Heart left ventricle (tissue), 16 donors: ENCODE measurements at regions of chr12 and their contacts with region 1.

Region 1: GRCh38 chr12:110888256-110888991 is 32.0 kb downstream of the MYL2 start:
- DNase-seq: no peak
- ATAC-seq: peak in 1 of 4 donors; percentile 6
- H3K4me3 ChIP-seq: peak overlapping the region in 5 of 12 donors; percentile 44 to 64 (median 61)
- H3K27ac ChIP-seq: peak overlapping the region in 2 of 12 donors; percentile 65 to 70
- H3K4me1 ChIP-seq: peaks cover 0 to 11% (median 0%) of the 10 kb centered on the region in 12 donors
- H3K27me3 ChIP-seq: no peaks in the 10 kb centered on the region
- CTCF ChIP-seq: peak in 4 of 12 donors; percentile 3 to 25 (median 14)
- POLR2A ChIP-seq: no peak

Region 2: GRCh38 chr12:110449799-110450497 is 438.5 kb before region 1 on chr12 and contains the start of gene ARPC3:
- intact Hi-C with region 1: loop called in 7 of 10 experiments (anchors 2 to 10 kb)
- DNase-seq: peak; percentile 94 to 97 (median 95)
- ATAC-seq: peak; percentile 98 to 99 (median 99)
- H3K4me3 ChIP-seq: peak within 1 kb of the TSS; percentile 62 to 96 (median 85)
- H3K27ac ChIP-seq: peak within 1 kb of the TSS; percentile 74 to 99 (median 92)
- H3K4me1 ChIP-seq: peaks cover 0 to 46% (median 14%) of the 10 kb centered on the region in 12 donors
- H3K27me3 ChIP-seq: no peaks in the 10 kb centered on the region
- CTCF ChIP-seq: peak; percentile 76 to 96 (median 86)
- POLR2A ChIP-seq: peak in 1 of 2 donors; percentile 73
- total RNA-seq, gene ARPC3: 77.2 to 251 (median 108) TPM

Region 3: GRCh38 chr12:110508071-110508586 is 380.3 kb before region 1 on chr12:
- intact Hi-C with region 1: loop called in 8 of 10 experiments (anchors 2 to 10 kb)
- DNase-seq: no peak
- ATAC-seq: no peak
- H3K4me3 ChIP-seq: no peak overlapping the region
- H3K27ac ChIP-seq: no peak overlapping the region
- H3K4me1 ChIP-seq: peaks cover 0 to 4% (median 0%) of the 10 kb centered on the region in 12 donors
- H3K27me3 ChIP-seq: no peaks in the 10 kb centered on the region
- CTCF ChIP-seq: no peak
- POLR2A ChIP-seq: no peak

Region 4: GRCh38 chr12:110619534-110619953 is 268.9 kb before region 1 on chr12:
- intact Hi-C with region 1: loop called in 8 of 10 experiments (anchors 5 to 10 kb)
- DNase-seq: no peak
- ATAC-seq: no peak
- H3K4me3 ChIP-seq: no peak overlapping the region
- H3K27ac ChIP-seq: no peak overlapping the region
- H3K4me1 ChIP-seq: peaks cover 0 to 6% (median 3%) of the 10 kb centered on the region in 12 donors
- H3K27me3 ChIP-seq: no peaks in the 10 kb centered on the region
- CTCF ChIP-seq: peak in 1 of 12 donors; percentile 7
- POLR2A ChIP-seq: no peak

Region 5: GRCh38 chr12:110704748-110705147 is 183.7 kb before region 1 on chr12:
- intact Hi-C with region 1: loop called in 5 of 10 experiments (anchors 5 to 10 kb)
- DNase-seq: no peak
- ATAC-seq: peak in 1 of 4 donors; percentile 11
- H3K4me3 ChIP-seq: no peak overlapping the region
- H3K27ac ChIP-seq: no peak overlapping the region
- H3K4me1 ChIP-seq: peaks cover 0 to 2% (median 0%) of the 10 kb centered on the region in 12 donors
- H3K27me3 ChIP-seq: no peaks in the 10 kb centered on the region
- CTCF ChIP-seq: no peak
- POLR2A ChIP-seq: no peak

Region 6: DNA sequence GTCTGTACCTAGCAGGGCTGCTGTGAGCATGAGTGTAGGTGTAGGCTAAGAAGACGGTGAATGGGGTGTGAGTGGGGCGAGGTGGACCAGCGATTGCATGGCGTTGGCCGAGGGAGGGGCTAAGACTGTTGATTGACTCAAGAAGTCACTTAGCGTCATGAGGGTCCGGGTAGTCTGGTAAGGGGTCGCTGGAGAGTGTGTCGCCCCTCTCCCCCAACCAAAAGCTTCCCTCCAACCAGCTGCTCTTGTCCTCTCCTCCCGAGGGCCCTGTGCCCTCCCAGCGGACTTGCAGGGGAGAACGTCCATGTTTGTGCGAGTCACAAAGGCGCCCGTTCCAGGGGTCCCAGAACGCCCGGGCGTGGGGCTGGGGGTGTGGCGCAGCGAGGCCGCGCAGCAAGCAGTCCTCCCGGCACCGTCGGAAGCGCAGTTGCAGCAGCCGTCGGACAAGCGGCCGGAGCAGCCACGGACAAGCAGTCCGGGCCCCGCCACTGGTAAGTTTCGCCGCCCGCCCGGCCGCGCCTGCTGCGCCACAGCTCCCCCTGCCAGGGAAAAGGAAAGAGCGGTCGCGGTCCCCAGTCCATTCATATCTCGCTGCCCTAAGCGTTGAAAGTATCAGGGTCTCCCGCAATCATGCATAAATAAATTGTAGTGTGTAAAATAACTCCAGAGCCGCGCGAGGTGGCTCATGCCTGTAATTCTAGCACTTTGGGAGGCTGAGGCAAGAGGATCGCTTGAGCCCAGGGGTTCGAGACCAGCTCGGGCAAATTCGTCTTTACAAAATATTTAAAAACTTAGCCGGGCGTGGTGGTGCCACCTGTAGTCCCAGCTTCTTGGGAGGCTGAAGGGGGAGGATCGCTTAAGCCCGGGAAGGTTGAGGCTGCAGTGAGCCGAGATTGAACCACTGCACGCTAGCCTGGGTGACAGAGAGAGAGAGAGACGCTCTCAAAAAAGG is 41.5 kb before region 1 on chr12 and contains the start of gene CCDC63:
- intact Hi-C with region 1: loop called in 1 of 10 experiments (anchors 5 kb)
- DNase-seq: peak; percentile 61 to 81 (median 70)
- ATAC-seq: peak in 3 of 4 donors; percentile 41 to 62 (median 57)
- H3K4me3 ChIP-seq: peak within 1 kb of the TSS in 9 of 12 donors; percentile 31 to 60 (median 37)
- H3K27ac ChIP-seq: peak within 1 kb of the TSS in 1 of 12 donors; percentile 52
- H3K4me1 ChIP-seq: peaks cover 0 to 18% (median 2%) of the 10 kb centered on the region in 12 donors
- H3K27me3 ChIP-seq: peaks cover 0 to 14% (median 0%) of the 10 kb centered on the region in 9 donors
- CTCF ChIP-seq: peak; percentile 24 to 71 (median 46)
- POLR2A ChIP-seq: no peak
- total RNA-seq, gene CCDC63: not detected

Region 7: DNA sequence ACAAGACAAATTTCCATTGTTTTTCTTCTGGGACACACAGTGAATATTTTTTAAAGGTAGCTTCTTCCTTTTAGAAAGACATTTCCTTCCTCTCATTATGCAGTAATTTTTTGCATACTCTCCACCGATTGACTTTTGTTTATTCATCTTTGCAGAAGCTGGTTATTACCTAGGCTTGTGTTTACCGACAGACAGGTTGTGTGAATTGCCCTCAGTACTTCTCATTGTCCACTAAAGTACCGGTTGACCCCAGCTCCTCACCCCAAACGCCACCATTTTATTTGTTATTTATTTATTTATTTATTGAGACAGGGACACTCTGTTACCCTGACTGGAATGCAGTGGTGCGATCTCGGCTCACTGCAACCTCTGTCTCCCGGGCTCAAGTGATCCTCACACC is 95.4 kb after region 1 on chr12:
- intact Hi-C with region 1: no loop called
- DNase-seq: no peak
- ATAC-seq: no peak
- H3K4me3 ChIP-seq: no peak overlapping the region
- H3K27ac ChIP-seq: no peak overlapping the region
- H3K4me1 ChIP-seq: no peaks in the 10 kb centered on the region
- H3K27me3 ChIP-seq: peaks cover 0 to 4% (median 0%) of the 10 kb centered on the region in 9 donors
- CTCF ChIP-seq: no peak
- POLR2A ChIP-seq: no peak